ENCODE measurements at regions of chr17 and their contacts with region 1.

Region 1: GRCh38 chr17:76547184-76547641 is 7.4 kb downstream of the PRCD start:
- DNase-seq: peak in 8 of 9 donors; percentile 47 to 71 (median 64)
- ATAC-seq: peak; percentile 92
- H3K4me3 ChIP-seq: no peak overlapping the region
- H3K4me3 Mint-ChIP-seq: no peak overlapping the region
- H3K27ac ChIP-seq: no peak overlapping the region
- H3K27ac Mint-ChIP-seq: no peak overlapping the region
- H3K4me1 ChIP-seq: no peaks in the 10 kb centered on the region
- H3K4me1 Mint-ChIP-seq: peaks cover 0 to 14% (median 4%) of the 10 kb centered on the region in 7 donors
- H3K27me3 ChIP-seq: no peaks in the 10 kb centered on the region
- H3K27me3 Mint-ChIP-seq: peaks cover 3 to 18% (median 7%) of the 10 kb centered on the region in 5 donors

Region 2: DNA sequence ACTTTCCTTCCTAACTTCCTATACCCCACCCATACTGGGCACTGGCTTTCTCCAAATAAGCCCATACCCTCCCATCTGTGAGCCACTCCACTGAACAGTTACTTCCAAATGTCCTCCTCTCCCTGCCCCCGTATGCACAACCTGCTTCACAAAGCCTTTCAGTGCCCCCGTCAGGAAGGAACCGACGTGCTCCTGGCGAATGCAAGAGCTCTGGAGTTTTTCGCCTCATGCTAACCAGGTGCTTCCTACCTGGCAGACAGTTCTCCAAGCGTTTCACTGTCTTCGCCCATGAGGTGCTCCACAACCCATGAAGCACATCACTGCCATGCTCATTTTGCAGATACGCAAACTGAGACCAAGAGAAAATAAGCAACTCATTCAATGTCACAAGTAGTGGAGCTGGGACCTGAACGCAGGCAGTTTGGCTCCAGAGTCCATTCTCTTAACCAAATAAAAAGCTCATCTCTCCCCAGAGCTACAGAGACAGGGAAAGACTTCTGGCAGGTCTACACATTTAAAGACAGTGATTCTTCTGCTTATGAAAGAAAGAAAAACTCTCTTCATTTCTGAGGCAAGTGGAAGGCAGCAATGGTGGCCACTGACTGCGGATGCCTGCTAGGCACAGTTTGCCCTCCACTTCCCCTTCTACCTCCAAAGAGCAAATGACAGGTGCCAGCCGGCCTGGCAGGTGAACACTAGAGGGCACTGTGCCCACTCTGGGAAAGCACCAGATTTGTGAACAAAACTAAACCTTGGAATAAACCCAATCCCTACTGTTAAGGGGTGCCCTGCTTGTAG is 139.0 kb before region 1 on chr17:
- CTCF ChIA-PET with region 1: no interaction called
- POLR2A ChIA-PET with region 1: no interaction called
- intact Hi-C with region 1: loop called in 1 of 2 experiments (anchors 1 kb)
- DNase-seq: peak; percentile 48 to 72 (median 65)
- ATAC-seq: peak; percentile 89
- H3K4me3 ChIP-seq: no peak overlapping the region
- H3K4me3 Mint-ChIP-seq: no peak overlapping the region
- H3K27ac ChIP-seq: no peak overlapping the region
- H3K27ac Mint-ChIP-seq: peak overlapping the region in 6 of 9 donors; percentile 25 to 75 (median 61)
- H3K4me1 ChIP-seq: no peaks in the 10 kb centered on the region
- H3K4me1 Mint-ChIP-seq: peaks cover 9 to 14% (median 11%) of the 10 kb centered on the region in 7 donors
- H3K27me3 ChIP-seq: no peaks in the 10 kb centered on the region
- H3K27me3 Mint-ChIP-seq: no peaks in the 10 kb centered on the region

Region 3: GRCh38 chr17:76523084-76524037 is 23.9 kb before region 1 on chr17:
- CTCF ChIA-PET with region 1: interaction called, 62 read pairs
- POLR2A ChIA-PET with region 1: interaction called, 3 read pairs
- intact Hi-C with region 1: loop called (anchors 1 kb)
- DNase-seq: peak; percentile 66 to 89 (median 79)
- ATAC-seq: peak; percentile 92
- H3K4me3 ChIP-seq: no peak overlapping the region
- H3K4me3 Mint-ChIP-seq: peak overlapping the region in 8 of 10 donors; percentile 10 to 71 (median 36)
- H3K27ac ChIP-seq: no peak overlapping the region
- H3K27ac Mint-ChIP-seq: peak overlapping the region in 8 of 9 donors; percentile 40 to 93 (median 72)
- H3K4me1 ChIP-seq: peaks cover 11 to 22% of the 10 kb centered on the region in 2 donors
- H3K4me1 Mint-ChIP-seq: peaks cover 16 to 31% (median 28%) of the 10 kb centered on the region in 7 donors
- H3K27me3 ChIP-seq: no peaks in the 10 kb centered on the region
- H3K27me3 Mint-ChIP-seq: peaks cover 0 to 11% (median 0%) of the 10 kb centered on the region in 5 donors

Region 4: DNA sequence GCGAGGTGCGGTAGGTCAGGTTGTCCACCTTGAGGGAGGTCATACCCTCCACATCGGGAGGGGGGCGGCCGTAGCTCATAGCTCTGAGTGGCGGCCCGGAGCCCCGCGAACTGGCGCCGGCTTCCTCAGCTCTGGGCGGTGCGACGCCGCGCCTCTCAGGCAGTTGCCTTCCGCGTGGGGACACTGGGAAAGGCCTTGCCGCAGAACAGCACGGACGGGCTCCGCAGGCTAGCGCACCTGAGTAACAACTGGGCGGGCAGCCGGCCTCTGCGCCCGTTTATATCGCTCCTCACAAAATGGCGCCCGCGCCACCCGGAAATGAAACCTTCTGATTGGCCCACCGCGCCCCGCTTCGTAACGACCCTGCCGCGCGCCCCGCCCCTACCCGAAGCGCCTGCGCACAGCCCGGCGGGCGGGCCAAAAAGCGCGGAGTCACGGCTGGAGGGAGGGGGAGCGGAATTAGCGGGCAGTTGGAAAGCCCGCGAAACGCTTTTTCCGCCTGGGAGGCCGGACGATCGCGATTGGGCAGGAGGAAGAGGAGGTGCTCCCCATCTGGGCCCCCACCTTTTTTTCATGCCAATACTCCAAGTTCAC is 190.0 kb after region 1 on chr17 and contains the start of gene SRSF2:
- CTCF ChIA-PET with region 1: no interaction called
- POLR2A ChIA-PET with region 1: no interaction called
- intact Hi-C with region 1: no loop called
- DNase-seq: peak; percentile 98 to 100 (median 99)
- ATAC-seq: peak; percentile 86
- H3K4me3 ChIP-seq: peak within 1 kb of the TSS; percentile 97
- H3K4me3 Mint-ChIP-seq: peak within 1 kb of the TSS; percentile 90 to 99 (median 97)
- H3K27ac ChIP-seq: peak within 1 kb of the TSS; percentile 96
- H3K27ac Mint-ChIP-seq: peak within 1 kb of the TSS; percentile 95 to 100 (median 99)
- H3K4me1 ChIP-seq: peaks cover 45 to 49% of the 10 kb centered on the region in 2 donors
- H3K4me1 Mint-ChIP-seq: peaks cover 26 to 66% (median 58%) of the 10 kb centered on the region in 7 donors
- H3K27me3 ChIP-seq: no peaks in the 10 kb centered on the region
- H3K27me3 Mint-ChIP-seq: no peaks in the 10 kb centered on the region
- total RNA-seq, gene SRSF2: 327 to 363 (median 351) TPM

Measured in naive thymus-derived CD4-positive, alpha-beta T cell (primary cell).